ENCODE measurements at regions of chr12 and their contacts with region 1.

Region 1: DNA sequence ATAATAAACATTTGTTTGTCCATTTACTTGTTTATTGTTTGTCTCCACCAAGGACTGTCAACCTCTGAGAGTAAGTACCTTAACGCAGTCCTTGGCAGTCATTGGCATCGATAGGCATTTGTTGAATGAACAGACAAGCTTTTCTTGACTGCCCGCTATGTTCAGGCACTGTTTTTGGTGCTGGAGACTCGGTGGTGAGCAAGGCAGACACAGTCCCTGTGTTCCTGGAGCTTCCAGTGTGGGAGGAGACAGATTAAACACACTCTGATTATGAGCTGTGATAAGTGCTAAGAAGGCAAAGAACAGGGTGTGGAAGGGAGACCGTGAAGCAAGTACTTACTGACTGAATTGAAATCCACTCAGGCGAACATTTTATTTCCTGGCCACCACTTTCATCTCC is 1.2 kb downstream of the ATP6V0A2 start:
- DNase-seq: peak in 1 of 10 donors; percentile 13
- H3K4me3 ChIP-seq: peak overlapping the region in 58 of 59 donors; percentile 63 to 100 (median 96)
- H3K27ac ChIP-seq: peak overlapping the region in 8 of 59 donors; percentile 5 to 85 (median 50)
- H3K27me3 ChIP-seq: no peaks in the 10 kb centered on the region
- CTCF ChIP-seq: no peak

Region 2: GRCh38 chr12:123633379-123634141 is 79.8 kb before region 1 on chr12 and contains the starts of genes EIF2B1 and GTF2H3:
- intact Hi-C with region 1: loop called (anchors 10 kb)
- DNase-seq: peak; percentile 95 to 99 (median 97)
- H3K4me3 ChIP-seq: peak within 1 kb of the TSS; percentile 57 to 100 (median 93)
- H3K27ac ChIP-seq: peak within 1 kb of the TSS; percentile 26 to 93 (median 77)
- H3K27me3 ChIP-seq: no peaks in the 10 kb centered on the region
- CTCF ChIP-seq: peak in 33 of 56 donors; percentile 6 to 55 (median 30)
- total RNA-seq, gene EIF2B1: 31.4 to 56.3 (median 43.6) TPM
- total RNA-seq, gene GTF2H3: 18.5 to 41.9 (median 28.2) TPM

Region 3: GRCh38 chr12:123670882-123671728 is 42.3 kb before region 1 on chr12 and contains the start of gene TCTN2:
- intact Hi-C with region 1: loop called in 1 of 2 experiments (anchors 5 kb)
- DNase-seq: peak; percentile 93 to 98 (median 96)
- H3K4me3 ChIP-seq: peak within 1 kb of the TSS; percentile 57 to 99 (median 85)
- H3K27ac ChIP-seq: peak within 1 kb of the TSS in 14 of 59 donors; percentile 1 to 67 (median 30)
- H3K27me3 ChIP-seq: no peaks in the 10 kb centered on the region
- CTCF ChIP-seq: peak in 4 of 56 donors; percentile 10 to 18 (median 12)
- total RNA-seq, gene TCTN2: 9.0 to 31.0 (median 18.4) TPM

Region 4: DNA sequence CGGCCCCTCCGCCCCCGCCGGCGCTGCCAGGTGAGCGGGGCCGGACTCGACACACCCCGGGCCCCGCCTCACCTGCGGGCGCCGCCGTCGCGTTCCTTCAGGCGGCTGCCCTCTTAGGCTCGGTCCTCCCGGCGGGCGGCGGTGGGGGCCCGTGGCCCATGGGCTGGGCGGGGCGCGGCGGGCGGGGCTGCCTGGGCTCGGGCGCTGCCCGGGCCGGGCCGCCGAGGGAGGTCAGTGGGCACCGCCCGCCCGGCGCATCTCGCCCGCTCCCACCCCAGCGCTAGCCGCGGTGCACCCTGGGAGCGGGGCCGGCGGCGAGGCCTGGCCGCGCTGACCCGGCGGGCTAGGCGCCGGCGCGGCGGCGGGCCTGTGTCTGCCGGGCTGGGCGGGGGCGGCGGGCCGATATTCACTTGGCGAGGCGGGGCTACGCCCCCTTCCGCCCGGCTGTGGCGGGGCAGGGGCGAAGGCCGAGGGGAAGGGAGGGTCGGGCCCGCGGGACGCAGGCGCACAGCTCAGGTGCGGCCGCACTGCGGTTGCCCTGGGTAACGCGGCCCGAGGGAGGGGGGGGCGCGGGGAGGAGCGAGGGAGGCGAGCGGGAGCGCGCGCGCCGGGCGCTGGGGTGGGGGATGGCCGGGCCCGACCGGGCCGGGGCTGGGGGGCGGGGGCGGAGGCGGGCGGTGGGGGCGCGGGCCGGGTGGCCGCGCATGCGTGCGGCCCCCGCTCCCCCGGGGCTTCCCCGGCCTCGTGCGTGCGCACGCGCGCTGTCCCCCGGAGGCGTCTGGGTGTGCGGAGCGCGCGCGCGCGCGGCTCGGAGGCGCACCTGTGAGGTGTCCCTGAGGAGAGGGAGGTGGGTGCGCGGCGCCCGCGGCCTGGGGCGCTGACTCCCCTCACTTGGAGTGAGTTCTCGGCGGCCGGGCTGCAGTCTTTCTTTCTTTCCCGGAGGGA is 259.3 kb after region 1 on chr12 and contains the starts of genes CCDC92 and ZNF664:
- intact Hi-C with region 1: loop called in 1 of 2 experiments (anchors 10 kb)
- DNase-seq: peak; percentile 76 to 92 (median 85)
- H3K4me3 ChIP-seq: peak within 1 kb of the TSS; percentile 79 to 99 (median 90)
- H3K27ac ChIP-seq: peak within 1 kb of the TSS; percentile 79 to 99 (median 95)
- H3K27me3 ChIP-seq: no peaks in the 10 kb centered on the region
- CTCF ChIP-seq: peak in 4 of 56 donors; percentile 4 to 19 (median 11)
- total RNA-seq, gene CCDC92: 89.7 to 184 (median 138) TPM
- total RNA-seq, gene ZNF664: 82.2 to 211 (median 117) TPM

Region 5: DNA sequence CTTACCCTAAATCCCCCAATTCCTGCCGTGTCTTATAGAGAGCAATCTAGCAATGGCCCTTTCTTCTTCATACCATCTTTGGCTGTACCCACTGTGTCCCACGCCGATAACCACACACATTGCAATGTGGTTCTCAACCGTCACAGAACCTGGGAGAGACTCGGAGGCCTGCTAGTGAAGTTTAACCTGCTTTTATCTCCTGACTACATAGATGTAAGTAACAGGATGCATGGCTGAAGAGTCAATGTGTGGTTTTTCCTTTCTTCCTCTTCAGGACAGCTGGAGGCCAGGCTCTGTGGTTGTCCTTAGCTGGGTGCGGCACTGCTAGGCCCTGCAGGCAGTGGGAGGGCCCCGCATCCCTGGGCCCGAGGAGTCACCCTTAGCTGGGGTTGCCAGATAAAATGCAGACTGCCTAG is 310.9 kb after region 1 on chr12:
- intact Hi-C with region 1: no loop called
- DNase-seq: no peak
- H3K4me3 ChIP-seq: no peak overlapping the region
- H3K27ac ChIP-seq: peak overlapping the region in 1 of 59 donors; percentile 35
- H3K27me3 ChIP-seq: no peaks in the 10 kb centered on the region
- CTCF ChIP-seq: no peak